ENCODE measurements at regions of chr1 and their contacts with region 1.

Region 1: DNA sequence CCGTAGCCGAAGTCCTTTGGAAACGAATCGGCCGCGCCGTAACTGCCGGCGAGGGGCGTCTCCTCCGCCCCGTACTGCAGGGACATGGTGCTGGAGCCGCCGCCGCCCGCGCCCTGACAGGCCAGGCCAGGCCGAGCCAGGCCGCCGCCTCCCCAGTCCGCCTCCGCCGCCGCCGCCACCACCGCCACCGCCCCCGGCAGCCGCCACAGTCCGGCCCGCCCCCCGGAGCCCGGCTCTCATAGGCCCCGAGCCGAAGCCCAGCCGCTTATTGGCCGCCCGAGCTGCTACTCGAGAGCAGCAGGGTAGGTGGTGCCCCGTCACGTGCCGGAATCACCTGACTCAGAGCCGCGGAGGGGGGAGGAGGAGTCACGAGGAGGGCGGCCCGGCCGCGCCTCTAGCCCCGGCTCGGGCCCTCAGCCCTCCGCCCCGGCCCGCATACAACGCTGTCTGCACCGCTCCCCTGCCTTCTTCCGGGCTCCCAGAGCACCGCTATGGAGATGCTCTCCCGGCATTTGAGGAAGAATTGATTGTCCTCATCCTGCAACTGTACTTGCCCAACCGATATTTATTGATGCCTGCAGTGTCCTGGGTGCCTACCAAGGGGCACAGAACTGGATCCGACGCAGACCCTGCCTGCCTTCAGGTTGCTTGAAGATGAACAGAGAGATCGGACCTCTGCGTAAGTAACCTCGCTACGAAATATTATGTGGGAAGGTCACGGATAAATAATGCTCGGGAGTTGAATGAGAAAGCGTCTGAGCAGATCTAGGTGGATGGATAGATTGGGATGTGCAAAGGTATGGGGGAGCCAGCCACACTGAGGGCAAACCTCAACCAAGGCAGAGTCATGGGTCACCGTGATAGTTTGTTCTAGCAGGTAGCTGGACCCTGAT is at the start of gene RRAGC:
- DNase-seq: peak; percentile 100
- H3K4me3 ChIP-seq: peak within 1 kb of the TSS; percentile 73 to 99 (median 98)
- H3K27ac ChIP-seq: peak within 1 kb of the TSS; percentile 87 to 96 (median 92)
- H3K4me1 ChIP-seq: peaks cover 0 to 76% (median 51%) of the 10 kb centered on the region in 4 donors
- H3K27me3 ChIP-seq: no peaks in the 10 kb centered on the region
- CTCF ChIP-seq: no peak
- EP300 ChIP-seq: peak in 2 of 4 donors; percentile 63 to 71
- POLR2A ChIP-seq: peak; percentile 45 to 57
- total RNA-seq, gene RRAGC: 18.2 to 24.9 (median 23.7) TPM

Region 2: DNA sequence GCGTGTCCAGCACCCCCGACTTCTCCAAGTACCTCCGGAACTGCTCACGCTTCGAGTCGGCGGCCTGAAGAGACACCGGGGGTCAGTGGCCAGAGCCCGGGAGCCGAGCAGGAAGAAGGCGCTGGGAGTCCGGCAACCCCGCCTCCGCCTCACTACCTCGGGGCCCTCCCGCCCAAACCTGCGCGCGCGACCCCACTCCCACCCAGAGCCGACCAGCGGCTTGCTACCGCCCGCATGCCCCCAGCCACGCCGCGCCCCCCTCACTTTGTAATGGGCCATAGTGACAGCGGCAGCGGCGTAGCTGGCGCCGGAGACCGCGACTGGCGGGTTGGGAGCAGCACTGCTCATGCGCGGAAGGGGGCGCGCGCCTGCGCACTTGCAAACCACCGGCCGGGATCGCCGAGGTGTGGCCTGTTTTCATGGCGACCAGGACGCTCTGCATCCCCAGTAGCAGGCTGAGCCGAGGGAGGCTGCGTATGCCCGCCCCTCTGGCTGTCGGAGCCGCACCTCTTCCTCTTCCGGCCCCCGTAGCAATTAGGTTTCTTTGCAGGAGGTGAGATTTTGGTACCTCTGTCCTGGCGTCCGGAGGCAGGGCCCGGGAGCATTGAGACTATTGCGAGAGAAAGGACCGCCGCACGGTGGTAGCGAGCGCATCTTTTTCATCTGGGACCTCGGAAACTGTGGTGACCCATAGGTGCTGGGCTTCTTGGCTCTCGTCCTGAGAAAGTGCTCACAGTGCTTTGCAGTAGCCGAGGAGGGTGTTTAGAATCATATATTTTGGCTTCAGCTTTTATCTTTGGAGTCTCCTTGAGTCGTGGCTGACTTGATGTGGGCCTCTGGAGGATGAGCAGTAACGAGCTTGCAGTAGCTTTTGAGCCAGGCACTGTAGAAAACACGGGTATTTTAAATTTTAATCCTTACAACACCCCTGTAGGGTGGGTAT is 13.5 kb after region 1 on chr1 and contains the start of gene MYCBP:
- intact Hi-C with region 1: loop called (anchors 1 kb)
- DNase-seq: peak; percentile 97
- H3K4me3 ChIP-seq: peak within 1 kb of the TSS; percentile 56 to 92 (median 79)
- H3K27ac ChIP-seq: peak within 1 kb of the TSS; percentile 71 to 80 (median 79)
- H3K4me1 ChIP-seq: peaks cover 0 to 24% (median 14%) of the 10 kb centered on the region in 4 donors
- H3K27me3 ChIP-seq: no peaks in the 10 kb centered on the region
- CTCF ChIP-seq: peak in 1 of 4 experiments; percentile 13
- EP300 ChIP-seq: no peak
- POLR2A ChIP-seq: no peak
- total RNA-seq, gene MYCBP: 13.0 to 18.9 (median 15.5) TPM

Region 3: GRCh38 chr1:38908821-38909220 is 49.0 kb after region 1 on chr1:
- intact Hi-C with region 1: no loop called
- DNase-seq: no peak
- H3K4me3 ChIP-seq: no peak overlapping the region
- H3K27ac ChIP-seq: no peak overlapping the region
- H3K4me1 ChIP-seq: no peaks in the 10 kb centered on the region
- H3K27me3 ChIP-seq: no peaks in the 10 kb centered on the region
- CTCF ChIP-seq: no peak
- EP300 ChIP-seq: no peak
- POLR2A ChIP-seq: no peak

Region 4: DNA sequence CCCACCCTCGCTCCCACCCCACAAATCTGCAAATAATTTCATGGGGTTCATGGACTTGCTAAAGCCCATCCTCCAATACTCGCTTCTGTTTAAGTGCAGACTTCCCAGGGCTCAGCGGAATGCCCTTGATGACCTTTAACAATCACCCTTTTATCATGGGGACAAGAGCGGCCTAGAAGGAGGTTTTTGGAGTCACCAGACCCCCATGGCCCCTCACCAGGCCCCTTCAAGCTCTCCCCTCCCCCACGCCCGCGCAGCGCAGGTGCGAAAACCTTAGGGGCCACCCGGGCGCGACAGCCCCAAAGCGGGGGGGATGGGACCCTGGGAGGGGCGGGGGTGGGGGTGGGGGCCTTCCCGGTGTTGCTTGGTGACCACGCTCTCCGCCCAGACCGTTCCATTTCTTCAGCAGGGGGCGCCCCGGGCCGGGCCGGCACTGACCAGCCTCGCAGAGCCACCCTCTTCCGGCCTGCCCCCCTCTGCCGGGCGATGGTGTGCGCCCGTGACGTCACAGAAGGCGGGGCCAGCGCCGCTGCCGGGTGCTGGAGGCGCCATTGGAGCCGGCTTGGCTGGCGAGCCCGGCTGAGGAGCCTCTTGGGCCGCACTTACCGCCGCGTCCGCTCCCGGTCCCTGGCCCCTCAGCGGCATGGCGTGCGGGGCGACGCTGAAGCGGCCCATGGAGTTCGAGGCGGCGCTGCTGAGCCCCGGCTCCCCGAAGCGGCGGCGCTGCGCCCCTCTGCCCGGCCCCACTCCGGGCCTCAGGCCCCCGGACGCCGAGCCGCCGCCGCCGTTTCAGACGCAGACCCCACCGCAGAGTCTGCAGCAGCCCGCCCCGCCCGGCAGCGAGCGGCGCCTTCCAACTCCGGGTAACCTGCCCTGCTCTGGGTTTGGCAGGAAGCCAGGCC is 131.2 kb after region 1 on chr1 and contains the start of gene AKIRIN1:
- intact Hi-C with region 1: loop called (anchors 1 kb)
- DNase-seq: peak; percentile 99
- H3K4me3 ChIP-seq: peak within 1 kb of the TSS; percentile 59 to 100 (median 98)
- H3K27ac ChIP-seq: peak within 1 kb of the TSS; percentile 97 to 100 (median 98)
- H3K4me1 ChIP-seq: peaks cover 0 to 33% (median 27%) of the 10 kb centered on the region in 4 donors
- H3K27me3 ChIP-seq: no peaks in the 10 kb centered on the region
- CTCF ChIP-seq: peak in 1 of 4 experiments; percentile 21
- EP300 ChIP-seq: no peak
- POLR2A ChIP-seq: peak; percentile 86 to 91
- total RNA-seq, gene AKIRIN1: 42.7 to 55.7 (median 51.6) TPM

Region 5: DNA sequence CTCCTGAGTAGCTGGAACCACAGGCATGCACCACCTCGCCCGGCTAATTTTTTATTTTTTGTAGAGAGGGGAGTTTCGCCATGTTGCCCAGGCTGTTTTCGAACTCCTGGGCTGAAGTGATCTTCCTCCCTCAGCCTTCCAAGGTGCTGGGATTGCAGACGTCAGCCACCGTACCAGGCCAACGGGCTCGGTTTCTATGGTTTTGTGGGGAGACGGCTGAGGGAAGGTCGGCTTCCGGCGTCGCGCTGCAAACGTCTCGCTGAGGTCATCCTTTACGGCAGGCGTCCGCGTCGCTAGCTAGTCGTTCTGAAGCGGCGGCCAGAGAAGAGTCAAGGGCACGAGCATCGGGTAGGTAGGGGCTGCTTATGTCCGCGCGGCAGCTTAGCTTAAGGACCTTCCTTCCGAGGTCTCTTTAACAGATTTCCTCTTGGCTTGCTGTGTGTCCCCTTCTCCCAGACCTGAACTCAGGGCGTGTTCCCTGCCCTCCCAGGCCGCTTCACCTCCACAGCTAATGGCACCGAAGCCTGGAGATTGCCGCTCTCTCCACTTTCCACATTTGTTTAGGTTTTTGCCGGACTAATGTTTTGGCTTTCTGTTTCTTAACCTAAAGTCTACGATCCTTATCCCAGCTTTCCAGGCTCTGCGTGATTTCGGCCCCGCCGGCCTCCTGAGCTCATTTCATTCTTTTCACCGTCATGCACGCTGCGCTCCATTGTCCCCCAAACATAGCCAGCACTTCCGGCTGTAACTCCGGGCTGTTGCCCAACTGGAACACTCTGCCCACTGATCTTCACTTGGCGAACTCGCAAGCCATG is 166.5 kb after region 1 on chr1 and contains the start of gene NDUFS5:
- intact Hi-C with region 1: loop called (anchors 1 kb)
- DNase-seq: peak; percentile 97
- H3K4me3 ChIP-seq: peak within 1 kb of the TSS; percentile 54 to 74 (median 69)
- H3K27ac ChIP-seq: peak within 1 kb of the TSS; percentile 89 to 96 (median 94)
- H3K4me1 ChIP-seq: peaks cover 0 to 38% (median 15%) of the 10 kb centered on the region in 4 donors
- H3K27me3 ChIP-seq: no peaks in the 10 kb centered on the region
- CTCF ChIP-seq: no peak
- EP300 ChIP-seq: peak in 1 of 4 donors; percentile 63
- POLR2A ChIP-seq: peak; percentile 94 to 96
- total RNA-seq, gene NDUFS5: 525 to 1,407 (median 722) TPM